AG04449 (cell line): ENCODE measurements at regions of chr12 and their contacts with region 1.

Region 1: GRCh38 chr12:19288603-19289244 is 150.6 kb upstream of the AEBP2 start:
- DNase-seq: no peak
- H3K4me3 ChIP-seq: no peak overlapping the region
- CTCF ChIP-seq: peak; percentile 38

Region 2: DNA sequence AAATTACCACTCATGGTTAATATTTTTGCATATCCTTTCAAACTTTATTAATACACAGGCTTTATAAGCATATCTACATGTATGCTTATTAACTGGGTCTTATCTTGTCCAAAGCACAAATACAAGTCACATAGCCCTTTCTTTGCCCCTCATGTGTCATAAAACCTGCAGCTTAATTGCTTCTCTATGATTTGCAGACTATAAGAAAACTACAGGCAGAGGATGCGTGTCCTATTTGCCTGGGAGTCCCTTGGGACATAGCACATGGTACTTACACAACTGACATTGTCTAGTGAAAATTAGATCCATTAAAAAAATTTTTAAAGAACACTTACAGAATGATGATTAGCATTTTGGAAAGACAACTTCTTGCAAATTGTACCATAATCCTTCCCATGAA is 349.7 kb before region 1 on chr12:
- CTCF ChIA-PET with region 1: no interaction called
- POLR2A ChIA-PET with region 1: no interaction called
- DNase-seq: no peak
- H3K4me3 ChIP-seq: no peak overlapping the region
- CTCF ChIP-seq: no peak

Region 3: GRCh38 chr12:19273482-19274330 is 15.0 kb before region 1 on chr12:
- CTCF ChIA-PET with region 1: interaction called, 36 read pairs
- POLR2A ChIA-PET with region 1: no interaction called
- DNase-seq: peak; percentile 95
- H3K4me3 ChIP-seq: no peak overlapping the region
- CTCF ChIP-seq: no peak

Region 4: DNA sequence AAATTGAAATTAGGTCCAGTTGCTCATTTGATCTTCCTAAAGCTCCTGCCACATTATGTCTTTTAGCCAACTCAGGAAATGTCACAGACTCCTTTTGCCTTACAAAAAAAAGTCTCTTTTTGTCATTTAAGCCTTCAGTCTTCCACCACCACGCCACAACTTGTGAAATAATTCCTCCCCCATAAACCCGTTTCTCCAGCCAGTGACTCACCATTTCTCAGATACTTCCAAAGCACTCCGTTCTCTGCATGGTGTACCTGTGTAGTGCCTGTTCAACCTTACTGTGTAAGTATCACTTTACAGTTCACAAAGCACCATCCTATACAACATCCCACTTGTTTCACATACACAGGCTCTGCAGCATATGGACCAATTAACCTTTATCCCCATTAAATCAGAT is 11.0 kb after region 1 on chr12:
- CTCF ChIA-PET with region 1: interaction called, 24 read pairs
- POLR2A ChIA-PET with region 1: no interaction called
- DNase-seq: no peak
- H3K4me3 ChIP-seq: no peak overlapping the region
- CTCF ChIP-seq: no peak